ENCODE measurements at regions of chr2 and their contacts with region 1.

Region 1: GRCh38 chr2:205680067-205680466 is 2.2 kb upstream of the NRP2 start:
- DNase-seq: peak; percentile 92
- ATAC-seq: peak; percentile 21
- H3K4me3 ChIP-seq: no peak overlapping the region
- H3K27ac ChIP-seq: no peak overlapping the region
- H3K4me1 ChIP-seq: peaks cover 4% of the 10 kb centered on the region
- H3K27me3 ChIP-seq: no peaks in the 10 kb centered on the region
- CTCF ChIP-seq: peak; percentile 76
- POLR2A ChIP-seq: no peak
- RAD21 ChIP-seq: peak; percentile 69

Region 2: GRCh38 chr2:204145263-204145751 is 1534.8 kb before region 1 on chr2:
- CTCF ChIA-PET with region 1: no interaction called
- POLR2A ChIA-PET with region 1: no interaction called
- dilution Hi-C with region 1: no loop called
- in situ Hi-C with region 1: no loop called
- intact Hi-C with region 1: loop called (anchors 2 kb)
- DNase-seq: peak; percentile 63
- ATAC-seq: peak; percentile 99
- H3K4me3 ChIP-seq: peak overlapping the region; percentile 14; the same call in 1 of the 2 replicates
- H3K27ac ChIP-seq: no peak overlapping the region
- H3K4me1 ChIP-seq: no peaks in the 10 kb centered on the region
- H3K27me3 ChIP-seq: peaks cover 21% of the 10 kb centered on the region
- CTCF ChIP-seq: peak; percentile 86
- POLR2A ChIP-seq: no peak
- RAD21 ChIP-seq: peak; percentile 91

Region 3: DNA sequence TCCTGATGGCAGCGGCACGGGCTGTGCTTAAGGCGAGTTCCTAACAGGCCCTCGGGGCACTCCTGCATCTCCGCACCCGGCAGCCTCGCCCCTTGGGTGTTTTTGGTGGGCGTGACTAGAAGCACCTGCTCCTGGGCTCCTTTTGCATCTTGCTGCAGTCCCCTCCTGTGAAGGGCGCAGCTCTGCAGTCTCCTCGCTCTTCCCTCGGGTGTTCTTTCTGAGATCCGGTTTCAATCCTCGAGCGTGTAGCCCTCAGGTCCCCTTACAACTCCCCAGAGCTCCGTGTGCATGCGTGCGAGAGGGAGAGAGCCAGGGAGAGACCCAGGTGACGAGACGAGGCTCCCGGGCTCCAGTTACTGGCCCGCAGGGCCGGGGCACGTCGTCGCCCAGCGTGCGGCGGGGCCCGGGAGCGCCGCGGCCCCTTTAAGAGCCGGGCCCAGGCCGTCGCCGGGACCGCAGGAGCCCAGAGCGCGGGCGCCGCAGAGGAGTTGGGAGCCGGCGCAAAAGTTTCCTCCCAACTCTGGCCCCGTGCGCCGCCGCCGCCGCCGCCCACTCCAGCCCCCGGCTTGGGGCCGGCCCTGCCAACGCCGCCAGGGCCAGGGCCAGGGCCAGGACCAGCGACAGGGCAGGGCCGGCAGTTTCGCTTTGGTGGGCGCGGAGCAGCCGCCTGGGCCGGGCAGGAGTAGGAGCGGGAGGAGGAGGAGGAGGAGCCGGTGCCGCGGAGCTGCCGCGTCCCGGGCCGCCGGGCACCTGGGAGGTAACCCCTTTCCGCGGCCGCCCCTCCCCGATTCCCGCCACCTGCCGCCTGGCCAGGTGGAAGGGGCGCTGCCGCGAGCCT is 1134.8 kb before region 1 on chr2 and contains the start of gene PARD3B:
- CTCF ChIA-PET with region 1: no interaction called
- POLR2A ChIA-PET with region 1: no interaction called
- dilution Hi-C with region 1: no loop called
- in situ Hi-C with region 1: loop called (anchors 25 kb)
- intact Hi-C with region 1: loop called (anchors 5 kb)
- DNase-seq: peak; percentile 62
- ATAC-seq: peak; percentile 94
- H3K4me3 ChIP-seq: peak within 1 kb of the TSS; percentile 83
- H3K27ac ChIP-seq: peak within 1 kb of the TSS; percentile 96
- H3K4me1 ChIP-seq: peaks cover 7% of the 10 kb centered on the region; the same call in 1 of the 2 replicates
- H3K27me3 ChIP-seq: no peaks in the 10 kb centered on the region
- CTCF ChIP-seq: no peak
- POLR2A ChIP-seq: peak; percentile 41; the same call in 1 of the 2 replicates
- RAD21 ChIP-seq: no peak
- total RNA-seq, gene PARD3B: 15.3 and 15.6 TPM in 2 replicates

Region 4: DNA sequence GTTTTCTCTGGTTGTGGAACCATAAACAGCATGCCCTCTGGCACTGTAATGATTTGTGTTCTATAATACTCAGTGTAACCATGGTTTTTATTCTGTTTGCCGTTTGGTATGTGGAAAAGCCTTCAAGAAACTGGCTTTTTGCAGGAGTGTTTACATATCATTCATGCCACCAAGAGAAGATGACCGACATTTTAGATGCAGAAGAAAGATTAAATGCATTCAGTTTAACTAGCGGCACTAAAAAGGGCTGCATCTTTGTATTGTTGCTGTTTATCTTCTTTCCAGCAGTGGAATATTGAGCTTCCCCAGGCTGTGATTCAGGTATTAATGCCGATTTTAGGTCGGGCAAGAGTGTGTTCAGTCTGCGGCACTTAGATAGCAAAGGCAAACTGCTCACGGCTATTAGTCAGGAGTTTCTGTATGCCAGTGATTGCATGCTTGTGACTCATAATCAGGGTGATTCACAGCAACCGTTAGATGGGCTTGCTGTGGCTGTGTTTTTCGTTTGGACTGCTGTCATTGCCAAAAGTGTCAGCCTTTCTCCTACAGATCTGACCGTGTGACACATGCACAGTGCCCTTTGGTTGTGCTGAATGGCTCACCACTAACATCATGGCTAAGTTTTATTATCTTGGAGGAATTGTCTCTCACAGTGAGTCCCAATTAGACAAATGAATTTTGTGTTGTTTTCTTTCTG is 655.1 kb before region 1 on chr2:
- CTCF ChIA-PET with region 1: no interaction called
- POLR2A ChIA-PET with region 1: no interaction called
- dilution Hi-C with region 1: no loop called
- in situ Hi-C with region 1: no loop called
- intact Hi-C with region 1: loop called (anchors 10 kb)
- DNase-seq: peak; percentile 98
- ATAC-seq: peak; percentile 95
- H3K4me3 ChIP-seq: peak overlapping the region; percentile 33; the same call in 1 of the 2 replicates
- H3K27ac ChIP-seq: peak overlapping the region; percentile 5; the same call in 1 of the 2 replicates
- H3K4me1 ChIP-seq: peaks cover 4% of the 10 kb centered on the region
- H3K27me3 ChIP-seq: no peaks in the 10 kb centered on the region
- CTCF ChIP-seq: no peak
- POLR2A ChIP-seq: no peak
- RAD21 ChIP-seq: peak; percentile 23; the same call in 1 of the 2 replicates

Region 5: GRCh38 chr2:205323929-205324328 is 356.1 kb before region 1 on chr2:
- CTCF ChIA-PET with region 1: interaction called, 4 read pairs
- POLR2A ChIA-PET with region 1: no interaction called
- dilution Hi-C with region 1: no loop called
- in situ Hi-C with region 1: loop called (anchors 10 kb)
- intact Hi-C with region 1: loop called (anchors 10 kb)
- DNase-seq: no peak
- ATAC-seq: no peak
- H3K4me3 ChIP-seq: no peak overlapping the region
- H3K27ac ChIP-seq: no peak overlapping the region
- H3K4me1 ChIP-seq: no peaks in the 10 kb centered on the region
- H3K27me3 ChIP-seq: no peaks in the 10 kb centered on the region
- CTCF ChIP-seq: peak; percentile 39
- POLR2A ChIP-seq: no peak
- RAD21 ChIP-seq: peak; percentile 52

Region 6: GRCh38 chr2:205435970-205436369 is 244.1 kb before region 1 on chr2:
- CTCF ChIA-PET with region 1: no interaction called
- POLR2A ChIA-PET with region 1: no interaction called
- dilution Hi-C with region 1: no loop called
- in situ Hi-C with region 1: no loop called
- intact Hi-C with region 1: no loop called
- DNase-seq: peak; percentile 35
- ATAC-seq: no peak
- H3K4me3 ChIP-seq: no peak overlapping the region
- H3K27ac ChIP-seq: no peak overlapping the region
- H3K4me1 ChIP-seq: no peaks in the 10 kb centered on the region; the same call in 1 of the 2 replicates
- H3K27me3 ChIP-seq: no peaks in the 10 kb centered on the region
- CTCF ChIP-seq: no peak
- POLR2A ChIP-seq: no peak
- RAD21 ChIP-seq: no peak

Region 7: GRCh38 chr2:205527801-205528200 is 152.3 kb before region 1 on chr2:
- CTCF ChIA-PET with region 1: no interaction called
- POLR2A ChIA-PET with region 1: no interaction called
- dilution Hi-C with region 1: no loop called
- in situ Hi-C with region 1: no loop called
- intact Hi-C with region 1: loop called (anchors 10 kb)
- DNase-seq: peak; percentile 59
- ATAC-seq: no peak
- H3K4me3 ChIP-seq: no peak overlapping the region
- H3K27ac ChIP-seq: no peak overlapping the region
- H3K4me1 ChIP-seq: peaks cover 2% of the 10 kb centered on the region; the same call in 1 of the 2 replicates
- H3K27me3 ChIP-seq: no peaks in the 10 kb centered on the region
- CTCF ChIP-seq: no peak
- POLR2A ChIP-seq: no peak
- RAD21 ChIP-seq: no peak